CD8-positive, alpha-beta T cell (primary cell): ENCODE measurements at regions of chr2 and their contacts with region 1.

Region 1: GRCh38 chr2:105576440-105577252 is 168.1 kb upstream of the NCK2 start:
- DNase-seq: peak in 3 of 9 experiments; percentile 49 to 64 (median 56)
- ATAC-seq: peak; percentile 71
- H3K4me3 ChIP-seq: no peak overlapping the region
- H3K4me3 Mint-ChIP-seq: no peak overlapping the region
- H3K27ac ChIP-seq: no peak overlapping the region
- H3K27ac Mint-ChIP-seq: peak overlapping the region; percentile 85
- H3K4me1 ChIP-seq: peaks cover 12% of the 10 kb centered on the region
- H3K4me1 Mint-ChIP-seq: peaks cover 37% of the 10 kb centered on the region
- H3K27me3 ChIP-seq: no peaks in the 10 kb centered on the region
- H3K27me3 Mint-ChIP-seq: no peaks in the 10 kb centered on the region
- CTCF ChIP-seq: peak; percentile 76

Region 2: GRCh38 chr2:105541189-105542050 is 35.2 kb before region 1 on chr2:
- CTCF ChIA-PET with region 1: no interaction called
- POLR2A ChIA-PET with region 1: no interaction called
- intact Hi-C with region 1: no loop called
- DNase-seq: peak in 1 of 9 experiments; percentile 5
- ATAC-seq: no peak
- H3K4me3 ChIP-seq: no peak overlapping the region
- H3K4me3 Mint-ChIP-seq: no peak overlapping the region
- H3K27ac ChIP-seq: no peak overlapping the region
- H3K27ac Mint-ChIP-seq: no peak overlapping the region
- H3K4me1 ChIP-seq: peaks cover 4% of the 10 kb centered on the region
- H3K4me1 Mint-ChIP-seq: peaks cover 9% of the 10 kb centered on the region
- H3K27me3 ChIP-seq: no peaks in the 10 kb centered on the region
- H3K27me3 Mint-ChIP-seq: peaks cover 8% of the 10 kb centered on the region
- CTCF ChIP-seq: no peak

Region 3: GRCh38 chr2:105671156-105671555 is 94.5 kb after region 1 on chr2:
- CTCF ChIA-PET with region 1: no interaction called
- POLR2A ChIA-PET with region 1: no interaction called
- intact Hi-C with region 1: no loop called
- DNase-seq: no peak
- ATAC-seq: no peak
- H3K4me3 ChIP-seq: no peak overlapping the region
- H3K4me3 Mint-ChIP-seq: no peak overlapping the region
- H3K27ac ChIP-seq: no peak overlapping the region
- H3K27ac Mint-ChIP-seq: no peak overlapping the region
- H3K4me1 ChIP-seq: no peaks in the 10 kb centered on the region
- H3K4me1 Mint-ChIP-seq: peaks cover 3% of the 10 kb centered on the region
- H3K27me3 ChIP-seq: no peaks in the 10 kb centered on the region
- H3K27me3 Mint-ChIP-seq: no peaks in the 10 kb centered on the region
- CTCF ChIP-seq: no peak

Region 4: DNA sequence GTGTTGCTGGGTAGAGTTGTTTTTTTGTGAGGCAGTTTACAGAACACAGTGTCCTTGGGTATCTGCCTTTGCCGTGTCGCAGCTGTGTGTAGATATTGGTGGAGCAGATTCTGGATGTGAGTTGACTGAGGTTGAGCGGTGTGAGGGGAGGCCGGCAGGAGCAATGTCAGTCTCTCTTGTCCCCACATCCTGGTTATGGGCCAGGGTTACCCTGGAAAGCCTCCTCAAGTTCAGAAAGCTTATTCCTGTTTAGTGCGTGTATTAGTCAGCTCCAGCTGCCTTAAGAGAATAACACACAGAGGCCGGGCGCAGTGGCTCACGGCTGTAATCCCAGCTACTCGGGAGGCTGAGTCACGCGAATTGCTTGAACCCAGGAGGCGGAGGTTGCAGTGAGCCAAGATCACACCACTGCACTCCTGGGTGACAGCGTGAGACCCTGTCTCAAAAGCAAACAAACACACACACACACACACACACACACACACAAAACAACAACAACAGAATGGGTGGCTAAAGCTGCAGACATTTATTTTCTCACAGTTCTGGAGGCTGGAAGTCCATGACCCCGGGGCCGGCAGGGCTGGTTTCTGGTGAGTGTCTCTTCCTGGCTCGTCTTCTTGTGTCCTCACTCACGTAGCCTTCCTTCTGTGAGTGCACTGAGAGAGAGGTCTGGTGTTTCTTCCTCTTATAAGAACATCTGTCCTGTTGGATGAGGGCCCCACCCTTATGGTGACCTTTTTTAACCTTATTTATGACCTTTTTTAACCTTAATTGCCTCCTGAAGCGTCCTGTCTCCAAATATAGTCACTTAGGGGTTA is 173.1 kb after region 1 on chr2:
- CTCF ChIA-PET with region 1: interaction called, 13 read pairs
- POLR2A ChIA-PET with region 1: interaction called, 3 read pairs
- intact Hi-C with region 1: loop called in 1 of 2 experiments (anchors 5 kb)
- DNase-seq: peak in 6 of 9 experiments; percentile 42 to 54 (median 48)
- ATAC-seq: no peak
- H3K4me3 ChIP-seq: peak overlapping the region; percentile 25 to 34
- H3K4me3 Mint-ChIP-seq: peak overlapping the region; percentile 92
- H3K27ac ChIP-seq: peak overlapping the region; percentile 70 to 80
- H3K27ac Mint-ChIP-seq: peak overlapping the region; percentile 97
- H3K4me1 ChIP-seq: peaks cover 78% of the 10 kb centered on the region
- H3K4me1 Mint-ChIP-seq: peaks cover 84% of the 10 kb centered on the region
- H3K27me3 ChIP-seq: no peaks in the 10 kb centered on the region
- H3K27me3 Mint-ChIP-seq: no peaks in the 10 kb centered on the region
- CTCF ChIP-seq: no peak

Region 5: GRCh38 chr2:105789745-105790460 is 213.3 kb after region 1 on chr2:
- CTCF ChIA-PET with region 1: interaction called, 5 read pairs
- POLR2A ChIA-PET with region 1: no interaction called
- intact Hi-C with region 1: loop called in 1 of 2 experiments (anchors 5 kb)
- DNase-seq: peak in 5 of 9 experiments; percentile 56 to 84 (median 70)
- ATAC-seq: peak; percentile 83
- H3K4me3 ChIP-seq: no peak overlapping the region
- H3K4me3 Mint-ChIP-seq: peak overlapping the region; percentile 62
- H3K27ac ChIP-seq: peak overlapping the region; percentile 8 to 86
- H3K27ac Mint-ChIP-seq: peak overlapping the region; percentile 94
- H3K4me1 ChIP-seq: peaks cover 91% of the 10 kb centered on the region
- H3K4me1 Mint-ChIP-seq: peaks cover 93% of the 10 kb centered on the region
- H3K27me3 ChIP-seq: no peaks in the 10 kb centered on the region
- H3K27me3 Mint-ChIP-seq: no peaks in the 10 kb centered on the region
- CTCF ChIP-seq: peak; percentile 39

Region 6: GRCh38 chr2:105888625-105889400 is 312.2 kb after region 1 on chr2:
- CTCF ChIA-PET with region 1: interaction called, 6 read pairs
- POLR2A ChIA-PET with region 1: no interaction called
- intact Hi-C with region 1: loop called (anchors 10 kb)
- DNase-seq: peak in 2 of 9 experiments; percentile 56 to 64
- ATAC-seq: no peak
- H3K4me3 ChIP-seq: no peak overlapping the region
- H3K4me3 Mint-ChIP-seq: no peak overlapping the region
- H3K27ac ChIP-seq: no peak overlapping the region
- H3K27ac Mint-ChIP-seq: peak overlapping the region; percentile 42
- H3K4me1 ChIP-seq: peaks cover 76% of the 10 kb centered on the region
- H3K4me1 Mint-ChIP-seq: peaks cover 70% of the 10 kb centered on the region
- H3K27me3 ChIP-seq: no peaks in the 10 kb centered on the region
- H3K27me3 Mint-ChIP-seq: no peaks in the 10 kb centered on the region
- CTCF ChIP-seq: no peak

Region 7: GRCh38 chr2:106104332-106105062 is 527.9 kb after region 1 on chr2:
- CTCF ChIA-PET with region 1: interaction called, 40 read pairs
- POLR2A ChIA-PET with region 1: no interaction called
- intact Hi-C with region 1: no loop called
- DNase-seq: peak; percentile 35 to 82 (median 67)
- ATAC-seq: peak; percentile 78
- H3K4me3 ChIP-seq: no peak overlapping the region
- H3K4me3 Mint-ChIP-seq: no peak overlapping the region
- H3K27ac ChIP-seq: no peak overlapping the region
- H3K27ac Mint-ChIP-seq: peak overlapping the region; percentile 78
- H3K4me1 ChIP-seq: no peaks in the 10 kb centered on the region
- H3K4me1 Mint-ChIP-seq: peaks cover 21% of the 10 kb centered on the region
- H3K27me3 ChIP-seq: no peaks in the 10 kb centered on the region
- H3K27me3 Mint-ChIP-seq: no peaks in the 10 kb centered on the region
- CTCF ChIP-seq: peak; percentile 94